ENCODE measurements at regions of chr7 and their contacts with region 1.

Region 1: GRCh38 chr7:99120501-99120900 is 23.4 kb downstream of the SMURF1 start:
- DNase-seq: no peak
- ATAC-seq: no peak
- H3K4me3 ChIP-seq: no peak overlapping the region
- H3K27ac ChIP-seq: no peak overlapping the region
- H3K4me1 ChIP-seq: no peaks in the 10 kb centered on the region
- H3K27me3 ChIP-seq: no peaks in the 10 kb centered on the region
- CTCF ChIP-seq: no peak
- EP300 ChIP-seq: no peak
- POLR2A ChIP-seq: no peak
- RAD21 ChIP-seq: no peak

Region 2: DNA sequence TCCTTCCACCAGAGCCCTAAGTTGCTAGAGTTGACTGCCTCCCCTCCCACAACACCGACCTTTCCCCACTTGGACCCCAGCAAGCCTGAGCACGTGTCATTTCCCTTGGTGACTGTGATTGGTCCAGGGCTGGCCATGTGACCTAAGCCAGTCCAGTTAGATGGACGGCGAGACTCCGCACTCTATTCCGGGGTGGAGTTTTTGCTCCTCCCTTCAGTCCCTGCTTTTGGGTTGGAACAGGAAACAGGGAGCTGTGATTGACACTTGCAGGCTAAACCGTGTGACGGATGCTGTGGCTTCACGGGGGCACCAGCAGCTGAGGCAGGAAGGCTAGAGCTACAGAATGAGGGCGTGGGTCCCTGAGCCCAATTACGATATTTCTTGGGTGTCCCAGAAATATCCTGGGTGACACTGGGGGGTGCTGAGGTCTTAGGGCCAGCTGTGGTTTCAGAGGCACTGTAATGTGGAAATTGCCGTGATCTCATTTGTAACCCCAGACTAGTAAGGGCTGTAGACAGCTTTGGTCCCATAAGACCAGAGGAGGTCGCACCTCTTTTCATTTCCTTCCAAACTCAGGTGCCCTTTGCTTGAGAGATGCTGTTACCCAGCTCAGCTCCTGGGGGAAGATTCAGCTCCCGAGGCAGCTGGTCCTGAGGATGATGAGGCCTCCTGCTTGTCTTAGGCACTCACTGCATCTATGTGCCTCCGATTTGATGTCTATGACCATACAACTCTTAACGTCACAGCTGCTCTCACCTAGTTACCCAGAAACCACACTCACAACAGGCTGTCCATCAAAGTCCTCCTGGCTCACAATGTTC is 606.1 kb before region 1 on chr7:
- CTCF ChIA-PET with region 1: no interaction called
- POLR2A ChIA-PET with region 1: no interaction called
- RAD21 ChIA-PET with region 1: no interaction called
- SMC1A ChIA-PET with region 1: no interaction called
- in situ Hi-C with region 1: no loop called
- intact Hi-C with region 1: no loop called
- DNase-seq: no peak
- ATAC-seq: no peak
- H3K4me3 ChIP-seq: no peak overlapping the region
- H3K27ac ChIP-seq: no peak overlapping the region
- H3K4me1 ChIP-seq: no peaks in the 10 kb centered on the region
- H3K27me3 ChIP-seq: no peaks in the 10 kb centered on the region
- CTCF ChIP-seq: no peak
- EP300 ChIP-seq: no peak
- POLR2A ChIP-seq: no peak
- RAD21 ChIP-seq: no peak

Region 3: GRCh38 chr7:99102809-99103690 is 17.5 kb before region 1 on chr7:
- CTCF ChIA-PET with region 1: interaction called, 5 read pairs
- POLR2A ChIA-PET with region 1: interaction called, 13 read pairs
- RAD21 ChIA-PET with region 1: no interaction called
- SMC1A ChIA-PET with region 1: interaction called, 3 read pairs
- in situ Hi-C with region 1: no loop called
- intact Hi-C with region 1: no loop called
- DNase-seq: no peak
- ATAC-seq: peak; percentile 76
- H3K4me3 ChIP-seq: no peak overlapping the region
- H3K27ac ChIP-seq: no peak overlapping the region; the same call in 1 of the 2 replicates
- H3K4me1 ChIP-seq: peaks cover 8% of the 10 kb centered on the region
- H3K27me3 ChIP-seq: no peaks in the 10 kb centered on the region
- CTCF ChIP-seq: no peak
- EP300 ChIP-seq: no peak
- POLR2A ChIP-seq: no peak
- RAD21 ChIP-seq: no peak

Region 4: DNA sequence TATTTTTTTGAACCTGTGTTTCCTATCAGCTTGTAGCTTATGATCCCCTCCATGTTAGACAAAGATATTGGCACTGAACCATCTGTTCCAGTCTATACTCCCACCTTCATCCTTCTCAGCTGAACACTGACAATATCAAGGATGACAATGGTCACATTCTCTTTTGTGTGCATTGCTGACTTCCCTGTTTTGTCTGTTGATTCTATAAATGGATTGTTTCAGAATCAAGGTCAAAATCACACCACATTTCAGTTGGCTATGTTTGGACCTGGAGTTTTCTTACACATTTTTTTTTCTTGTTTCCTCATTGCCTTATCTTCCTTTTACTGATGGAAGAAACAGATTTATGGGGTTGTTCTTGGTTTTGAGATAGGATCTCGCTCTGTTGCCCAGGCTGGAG is 34.7 kb after region 1 on chr7:
- CTCF ChIA-PET with region 1: no interaction called
- POLR2A ChIA-PET with region 1: no interaction called
- RAD21 ChIA-PET with region 1: no interaction called
- SMC1A ChIA-PET with region 1: no interaction called
- in situ Hi-C with region 1: no loop called
- intact Hi-C with region 1: no loop called
- DNase-seq: no peak
- ATAC-seq: no peak
- H3K4me3 ChIP-seq: no peak overlapping the region
- H3K27ac ChIP-seq: no peak overlapping the region
- H3K4me1 ChIP-seq: no peaks in the 10 kb centered on the region
- H3K27me3 ChIP-seq: no peaks in the 10 kb centered on the region
- CTCF ChIP-seq: no peak
- EP300 ChIP-seq: no peak
- POLR2A ChIP-seq: no peak
- RAD21 ChIP-seq: no peak

Measured in GM12878 (cell line).